ENCODE measurements at regions of chr19 and their contacts with region 1.

Region 1: DNA sequence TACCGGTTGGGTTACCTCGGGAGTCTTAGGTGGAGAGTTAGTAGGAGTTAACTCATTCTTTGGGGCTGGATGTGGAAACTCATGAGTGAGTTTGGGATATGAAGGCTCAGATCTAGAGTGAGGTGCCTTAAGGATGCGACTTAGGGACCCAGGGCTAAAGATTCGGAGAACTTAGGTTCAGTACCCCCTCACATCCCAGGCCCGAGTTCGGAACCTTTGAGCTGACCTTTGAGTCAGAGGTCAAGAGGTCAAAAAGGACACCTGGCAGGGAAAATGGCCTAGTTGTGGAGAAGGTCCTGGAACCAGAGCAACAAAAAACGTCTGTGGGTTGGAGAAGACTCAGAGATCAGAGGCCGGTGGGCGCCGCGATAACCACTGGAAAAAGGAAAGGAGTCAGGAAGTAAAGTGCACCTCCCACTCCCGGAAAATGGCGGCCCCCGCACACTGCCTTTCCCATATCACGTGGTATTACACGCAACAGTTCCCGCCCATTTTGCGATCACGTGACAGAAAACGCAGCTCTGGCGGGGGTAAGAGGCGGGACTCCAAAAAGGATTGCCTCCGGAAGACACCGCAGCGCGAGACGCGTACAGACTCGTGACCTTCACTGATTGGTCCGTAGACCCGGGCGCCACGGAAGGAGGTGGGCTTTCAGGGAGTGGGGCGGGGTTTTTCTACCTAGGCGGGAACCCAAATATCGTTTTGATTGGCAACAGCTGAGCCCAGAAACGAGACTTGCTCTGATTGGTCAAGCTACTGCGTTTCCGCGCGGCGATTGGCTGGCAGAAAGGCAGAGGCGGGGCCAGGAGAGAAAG is at the start of gene ACTMAP:
- DNase-seq: peak; percentile 100
- H3K4me3 ChIP-seq: peak within 1 kb of the TSS; percentile 56 to 86 (median 73)
- H3K27ac ChIP-seq: peak within 1 kb of the TSS; percentile 94
- H3K4me1 ChIP-seq: peaks cover 28% of the 10 kb centered on the region
- H3K27me3 ChIP-seq: no peaks in the 10 kb centered on the region
- CTCF ChIP-seq: no peak
- POLR2A ChIP-seq: peak; percentile 76
- total RNA-seq, gene ACTMAP: 7.7 and 9.1 TPM in 2 replicates

Region 2: DNA sequence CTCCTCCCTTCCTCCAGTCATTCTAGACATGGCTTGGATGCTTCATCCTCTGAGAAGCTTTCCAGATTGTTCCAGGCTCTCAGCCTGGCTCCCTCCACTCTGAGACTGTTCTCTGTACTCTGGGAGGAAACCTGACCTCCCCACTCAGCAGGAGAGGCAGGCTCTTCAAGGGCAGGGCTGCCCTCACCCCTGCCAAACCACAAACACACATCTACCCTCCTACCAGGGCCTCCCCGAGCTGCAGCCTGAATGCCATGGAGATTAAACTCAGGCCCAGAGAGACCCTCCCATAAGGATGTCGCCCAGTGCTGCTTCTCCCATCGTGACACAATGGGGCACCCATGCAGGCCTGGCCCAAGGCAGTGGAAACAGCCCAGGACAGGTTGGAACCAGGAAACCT is 76.0 kb before region 1 on chr19:
- CTCF ChIA-PET with region 1: no interaction called
- POLR2A ChIA-PET with region 1: no interaction called
- dilution Hi-C with region 1: no loop called
- intact Hi-C with region 1: no loop called
- DNase-seq: no peak
- H3K4me3 ChIP-seq: no peak overlapping the region
- H3K27ac ChIP-seq: no peak overlapping the region
- H3K4me1 ChIP-seq: no peaks in the 10 kb centered on the region
- H3K27me3 ChIP-seq: no peaks in the 10 kb centered on the region
- CTCF ChIP-seq: no peak
- POLR2A ChIP-seq: no peak

Region 3: GRCh38 chr19:40690693-40691420 is 59.4 kb before region 1 on chr19:
- CTCF ChIA-PET with region 1: no interaction called
- POLR2A ChIA-PET with region 1: interaction called, 3 read pairs
- dilution Hi-C with region 1: no loop called
- intact Hi-C with region 1: loop called (anchors 1 kb)
- DNase-seq: peak; percentile 91
- H3K4me3 ChIP-seq: peak overlapping the region; percentile 42 to 73 (median 62)
- H3K27ac ChIP-seq: peak overlapping the region; percentile 91
- H3K4me1 ChIP-seq: peaks cover 13% of the 10 kb centered on the region
- H3K27me3 ChIP-seq: no peaks in the 10 kb centered on the region
- CTCF ChIP-seq: no peak
- POLR2A ChIP-seq: peak; percentile 36

Region 4: DNA sequence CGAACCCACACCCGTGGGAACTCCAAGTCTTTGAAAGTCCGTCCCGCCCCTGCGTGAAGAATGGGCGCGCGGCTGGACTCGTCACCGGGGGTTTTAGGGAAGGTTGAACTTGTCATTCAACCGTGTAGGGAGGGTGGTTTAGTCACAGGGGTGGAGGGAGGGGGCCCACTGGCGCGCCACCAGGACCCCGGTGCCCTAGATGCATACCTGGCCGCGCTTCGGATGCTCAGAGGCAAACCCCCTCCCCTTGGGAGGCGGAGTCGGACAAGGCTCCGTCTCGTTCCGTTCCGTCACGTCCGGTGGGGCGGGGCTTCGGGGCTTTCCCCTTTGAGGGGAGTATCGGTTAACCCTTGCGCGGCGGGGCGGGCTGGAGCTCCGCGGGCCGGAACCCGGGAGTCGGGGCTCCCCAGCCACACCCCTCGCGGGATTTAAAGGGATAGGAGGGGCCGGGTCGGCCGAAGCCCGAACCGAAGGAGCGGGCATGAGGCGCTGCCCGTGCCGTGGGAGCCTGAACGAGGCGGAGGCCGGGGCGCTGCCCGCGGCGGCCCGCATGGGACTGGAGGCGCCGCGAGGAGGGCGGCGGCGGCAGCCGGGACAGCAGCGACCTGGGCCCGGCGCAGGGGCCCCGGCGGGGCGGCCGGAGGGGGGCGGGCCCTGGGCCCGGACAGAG is 33.5 kb before region 1 on chr19 and contains the starts of genes COQ8B and ITPKC:
- CTCF ChIA-PET with region 1: interaction called, 8 read pairs
- POLR2A ChIA-PET with region 1: interaction called, 5 read pairs
- dilution Hi-C with region 1: no loop called
- intact Hi-C with region 1: loop called (anchors 1 kb)
- DNase-seq: peak; percentile 97
- H3K4me3 ChIP-seq: peak within 1 kb of the TSS; percentile 39 to 78 (median 53)
- H3K27ac ChIP-seq: peak within 1 kb of the TSS; percentile 94
- H3K4me1 ChIP-seq: peaks cover 52% of the 10 kb centered on the region
- H3K27me3 ChIP-seq: no peaks in the 10 kb centered on the region
- CTCF ChIP-seq: no peak
- POLR2A ChIP-seq: peak; percentile 62
- total RNA-seq, gene COQ8B: 15.3 and 19.2 TPM in 2 replicates
- total RNA-seq, gene ITPKC: 16.1 and 16.9 TPM in 2 replicates

Region 5: GRCh38 chr19:40798223-40798996 is 48.1 kb after region 1 on chr19:
- CTCF ChIA-PET with region 1: interaction called, 15 read pairs
- POLR2A ChIA-PET with region 1: interaction called, 5 read pairs
- dilution Hi-C with region 1: no loop called
- intact Hi-C with region 1: loop called (anchors 1 kb)
- DNase-seq: peak; percentile 100
- H3K4me3 ChIP-seq: peak overlapping the region; percentile 43 to 79 (median 52)
- H3K27ac ChIP-seq: peak overlapping the region; percentile 71
- H3K4me1 ChIP-seq: peaks cover 42% of the 10 kb centered on the region
- H3K27me3 ChIP-seq: no peaks in the 10 kb centered on the region
- CTCF ChIP-seq: peak; percentile 12 to 32
- POLR2A ChIP-seq: no peak

Region 6: GRCh38 chr19:40806488-40807468 is 56.5 kb after region 1 on chr19:
- CTCF ChIA-PET with region 1: interaction called, 22 read pairs
- POLR2A ChIA-PET with region 1: interaction called, 5 read pairs
- dilution Hi-C with region 1: no loop called
- intact Hi-C with region 1: loop called (anchors 1 kb)
- DNase-seq: peak; percentile 99
- H3K4me3 ChIP-seq: peak overlapping the region in 1 of 3 experiments; percentile 9
- H3K27ac ChIP-seq: peak overlapping the region; percentile 35
- H3K4me1 ChIP-seq: peaks cover 63% of the 10 kb centered on the region
- H3K27me3 ChIP-seq: peaks cover 0 to under 1% of the 10 kb centered on the region in 2 experiments
- CTCF ChIP-seq: peak; percentile 99
- POLR2A ChIP-seq: peak; percentile 29

Measured in endothelial cell of umbilical vein (primary cell).